ENCODE measurements at regions of chr17 and their contacts with region 1.

Region 1: GRCh38 chr17:3738562-3739295 is 15.0 kb downstream of the HASPIN start:
- DNase-seq: peak; percentile 37
- H3K4me3 Mint-ChIP-seq: peak overlapping the region; percentile 26
- H3K27ac Mint-ChIP-seq: no peak overlapping the region
- H3K4me1 Mint-ChIP-seq: peaks cover 16% of the 10 kb centered on the region
- H3K27me3 Mint-ChIP-seq: peaks cover 10% of the 10 kb centered on the region
- CTCF ChIP-seq: no peak

Region 2: DNA sequence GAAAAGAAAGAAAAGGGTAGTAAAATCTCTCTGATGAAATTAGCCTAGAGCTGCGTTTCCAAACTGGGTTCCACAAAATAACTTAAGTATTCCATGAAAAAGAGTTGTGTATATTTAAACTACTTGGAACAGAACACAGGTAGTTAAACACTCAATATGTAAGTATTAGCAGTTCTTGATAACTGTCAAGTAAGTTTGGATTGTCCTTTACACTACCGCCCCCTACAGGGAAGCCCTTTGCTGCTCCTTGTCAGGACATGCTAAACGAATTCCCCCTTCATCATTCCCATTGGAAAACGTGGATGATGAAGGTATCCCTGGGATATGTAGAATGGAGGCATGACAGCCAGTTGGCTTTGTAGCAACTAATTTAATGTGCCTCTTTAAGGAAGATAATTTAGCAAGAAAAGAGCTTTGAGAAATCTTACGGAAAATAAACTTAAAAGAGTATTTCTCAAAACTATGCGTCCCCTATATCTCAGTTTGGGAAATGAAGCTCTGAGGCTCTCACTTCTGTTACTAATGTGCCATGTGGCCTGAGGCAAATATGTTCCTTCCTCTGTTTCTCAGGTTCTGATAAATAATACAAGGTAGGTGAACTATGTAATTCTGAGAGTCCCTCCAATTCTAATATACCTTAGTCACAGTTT is 88.5 kb after region 1 on chr17:
- CTCF ChIA-PET with region 1: interaction called, 7 read pairs
- intact Hi-C with region 1: loop called (anchors 1 kb)
- DNase-seq: peak; percentile 69
- H3K4me3 Mint-ChIP-seq: no peak overlapping the region
- H3K27ac Mint-ChIP-seq: no peak overlapping the region
- H3K4me1 Mint-ChIP-seq: no peaks in the 10 kb centered on the region
- H3K27me3 Mint-ChIP-seq: no peaks in the 10 kb centered on the region
- CTCF ChIP-seq: peak; percentile 35

Measured in Calu3 (cell line).